ENCODE measurements at regions of chr15 and their contacts with region 1.

Region 1: DNA sequence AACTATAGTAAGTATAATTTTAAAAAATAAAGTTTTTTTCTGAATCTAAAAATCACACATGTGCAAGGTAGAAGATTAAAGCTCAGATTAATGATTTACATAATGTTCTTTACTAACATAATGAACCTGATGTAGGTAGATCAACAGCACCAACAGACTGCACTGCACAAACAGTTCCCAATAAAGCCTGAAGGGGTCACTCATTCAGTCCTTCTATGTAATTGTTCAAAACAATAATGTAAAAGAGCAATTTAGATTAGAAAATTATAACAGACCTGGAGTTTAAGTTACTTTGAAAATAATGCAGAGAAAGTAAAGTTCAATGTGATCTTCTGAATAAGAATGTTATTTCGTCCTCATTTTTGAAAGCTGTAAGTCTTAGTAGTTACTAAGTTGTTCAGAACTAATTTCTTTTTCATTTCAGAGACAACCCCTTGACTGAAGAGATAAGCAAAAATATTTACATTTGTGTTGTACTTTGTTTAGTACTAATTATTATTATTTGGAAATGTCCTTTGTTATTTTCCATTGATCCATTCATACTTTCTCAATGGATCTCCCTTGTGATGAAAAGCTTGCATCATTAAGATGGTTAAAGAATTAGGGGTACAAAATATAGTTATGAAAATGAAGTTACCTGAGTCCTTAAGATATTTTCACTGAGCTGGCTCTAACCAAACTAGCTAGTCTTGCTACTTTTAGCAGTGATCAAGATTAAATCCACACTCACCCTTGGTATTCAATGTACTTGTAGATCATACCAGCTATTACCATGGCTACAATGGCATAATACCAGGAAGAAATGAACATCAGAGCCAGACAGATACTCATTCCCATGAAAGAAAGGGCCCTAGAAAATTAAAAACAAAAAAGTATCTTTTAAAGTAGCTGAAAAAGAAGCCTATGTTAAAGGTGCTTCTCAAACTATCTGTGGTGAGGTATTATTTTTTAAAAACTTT is 16.8 kb downstream of the EMC4 start:
- DNase-seq: peak; percentile 66 to 84 (median 75)
- H3K4me3 ChIP-seq: no peak overlapping the region
- H3K27ac ChIP-seq: peak overlapping the region in 1 of 2 experiments; percentile 37
- H3K4me1 ChIP-seq: no peaks in the 10 kb centered on the region
- H3K27me3 ChIP-seq: no peaks in the 10 kb centered on the region

Region 2: GRCh38 chr15:34223904-34224596 is 17.6 kb before region 1 on chr15:
- CTCF ChIA-PET with region 1: interaction called, 12 read pairs
- POLR2A ChIA-PET with region 1: no interaction called
- DNase-seq: peak in 2 of 3 donors; percentile 22 to 35
- H3K4me3 ChIP-seq: peak overlapping the region; percentile 65 to 99 (median 86)
- H3K27ac ChIP-seq: peak overlapping the region; percentile 83 to 92
- H3K4me1 ChIP-seq: peaks cover 7 to 17% (median 14%) of the 10 kb centered on the region in 4 experiments
- H3K27me3 ChIP-seq: no peaks in the 10 kb centered on the region

Region 3: DNA sequence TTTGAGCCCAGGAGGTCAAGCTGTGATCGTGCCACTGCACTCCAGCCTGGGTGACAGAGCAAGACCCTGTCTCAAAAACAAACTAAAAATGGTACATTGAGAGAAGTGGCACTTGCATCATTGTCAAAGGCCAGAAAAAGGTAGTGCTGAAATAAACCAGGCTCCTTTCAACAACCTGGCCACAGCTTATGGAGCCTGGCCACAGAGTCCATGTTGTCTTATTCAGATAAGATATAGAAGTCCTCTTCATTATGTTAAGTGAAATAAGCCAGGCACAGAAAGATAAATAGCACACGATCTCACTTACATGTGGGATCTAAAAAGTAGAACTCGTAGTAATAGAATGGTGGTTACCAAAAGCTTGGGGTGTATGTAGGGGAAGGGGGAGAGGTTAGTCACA is 17.9 kb after region 1 on chr15:
- CTCF ChIA-PET with region 1: interaction called, 31 read pairs
- POLR2A ChIA-PET with region 1: interaction called, 6 read pairs
- DNase-seq: no peak
- H3K4me3 ChIP-seq: no peak overlapping the region
- H3K27ac ChIP-seq: no peak overlapping the region
- H3K4me1 ChIP-seq: no peaks in the 10 kb centered on the region
- H3K27me3 ChIP-seq: no peaks in the 10 kb centered on the region

Region 4: GRCh38 chr15:34358367-34358766 is 116.7 kb after region 1 on chr15:
- CTCF ChIA-PET with region 1: interaction called, 14 read pairs
- POLR2A ChIA-PET with region 1: interaction called, 3 read pairs
- DNase-seq: peak in 2 of 3 donors; percentile 33 to 37
- H3K4me3 ChIP-seq: no peak overlapping the region
- H3K27ac ChIP-seq: no peak overlapping the region
- H3K4me1 ChIP-seq: no peaks in the 10 kb centered on the region
- H3K27me3 ChIP-seq: no peaks in the 10 kb centered on the region

Region 5: GRCh38 chr15:34810455-34811146 is 569.0 kb after region 1 on chr15:
- CTCF ChIA-PET with region 1: no interaction called
- POLR2A ChIA-PET with region 1: no interaction called
- DNase-seq: no peak
- H3K4me3 ChIP-seq: no peak overlapping the region
- H3K27ac ChIP-seq: no peak overlapping the region
- H3K4me1 ChIP-seq: no peaks in the 10 kb centered on the region
- H3K27me3 ChIP-seq: peaks cover 0 to 2% (median 0%) of the 10 kb centered on the region in 5 experiments

Measured in common myeloid progenitor, CD34-positive (primary cell).